ENCODE measurements at regions of chr14 and their contacts with region 1.

Region 1: GRCh38 chr14:55438066-55438683 is 2.2 kb downstream of the TBPL2 start:
- DNase-seq: peak; percentile 59 to 71
- ATAC-seq: peak; percentile 93
- H3K4me3 ChIP-seq: no peak overlapping the region
- H3K27ac ChIP-seq: no peak overlapping the region
- H3K4me1 ChIP-seq: no peaks in the 10 kb centered on the region
- CTCF ChIP-seq: peak; percentile 86
- EP300 ChIP-seq: no peak
- POLR2A ChIP-seq: no peak
- RAD21 ChIP-seq: peak; percentile 87 to 89

Region 2: GRCh38 chr14:55381040-55381439 is 57.1 kb before region 1 on chr14:
- CTCF ChIA-PET with region 1: no interaction called
- POLR2A ChIA-PET with region 1: no interaction called
- DNase-seq: no peak
- ATAC-seq: no peak
- H3K4me3 ChIP-seq: no peak overlapping the region
- H3K27ac ChIP-seq: no peak overlapping the region
- H3K4me1 ChIP-seq: peaks cover 8% of the 10 kb centered on the region; the same call in 2 of the 3 replicates
- CTCF ChIP-seq: no peak
- EP300 ChIP-seq: no peak
- POLR2A ChIP-seq: no peak
- RAD21 ChIP-seq: no peak

Region 3: GRCh38 chr14:55416866-55417265 is 21.3 kb before region 1 on chr14:
- CTCF ChIA-PET with region 1: interaction called, 21 read pairs
- POLR2A ChIA-PET with region 1: no interaction called
- DNase-seq: peak in 1 of 2 experiments; percentile 51
- ATAC-seq: peak; percentile 54 to 79; a peak in 3 of 6 replicates
- H3K4me3 ChIP-seq: no peak overlapping the region
- H3K27ac ChIP-seq: no peak overlapping the region
- H3K4me1 ChIP-seq: peaks cover 3% of the 10 kb centered on the region; the same call in 1 of the 3 replicates
- CTCF ChIP-seq: peak; percentile 44
- EP300 ChIP-seq: no peak
- POLR2A ChIP-seq: no peak
- RAD21 ChIP-seq: peak in 1 of 2 experiments; percentile 55; a peak in 3 of 5 replicates

Region 4: DNA sequence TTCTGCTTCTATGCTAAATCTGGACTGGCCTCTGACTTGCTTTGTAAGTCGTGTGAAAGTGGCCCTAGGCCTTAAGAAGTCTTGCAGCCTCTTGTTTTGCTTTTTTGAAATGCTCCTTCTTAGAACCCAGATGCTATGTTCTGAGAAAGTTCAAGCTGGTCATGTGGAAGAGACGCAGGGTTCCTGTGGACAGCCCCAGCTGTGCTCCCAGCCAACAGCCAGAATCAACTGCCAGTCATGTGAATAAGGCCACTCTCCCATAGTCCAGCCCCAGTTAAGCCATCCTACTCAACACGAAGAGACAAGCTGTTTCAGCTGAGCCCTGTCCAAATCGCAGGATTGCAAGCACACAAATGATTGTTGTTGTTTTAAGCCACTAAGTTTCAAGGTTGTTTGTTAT is 39.5 kb after region 1 on chr14:
- CTCF ChIA-PET with region 1: no interaction called
- POLR2A ChIA-PET with region 1: no interaction called
- DNase-seq: no peak
- ATAC-seq: no peak
- H3K4me3 ChIP-seq: no peak overlapping the region
- H3K27ac ChIP-seq: no peak overlapping the region
- H3K4me1 ChIP-seq: no peaks in the 10 kb centered on the region
- CTCF ChIP-seq: no peak
- EP300 ChIP-seq: no peak
- POLR2A ChIP-seq: no peak
- RAD21 ChIP-seq: no peak

Region 5: DNA sequence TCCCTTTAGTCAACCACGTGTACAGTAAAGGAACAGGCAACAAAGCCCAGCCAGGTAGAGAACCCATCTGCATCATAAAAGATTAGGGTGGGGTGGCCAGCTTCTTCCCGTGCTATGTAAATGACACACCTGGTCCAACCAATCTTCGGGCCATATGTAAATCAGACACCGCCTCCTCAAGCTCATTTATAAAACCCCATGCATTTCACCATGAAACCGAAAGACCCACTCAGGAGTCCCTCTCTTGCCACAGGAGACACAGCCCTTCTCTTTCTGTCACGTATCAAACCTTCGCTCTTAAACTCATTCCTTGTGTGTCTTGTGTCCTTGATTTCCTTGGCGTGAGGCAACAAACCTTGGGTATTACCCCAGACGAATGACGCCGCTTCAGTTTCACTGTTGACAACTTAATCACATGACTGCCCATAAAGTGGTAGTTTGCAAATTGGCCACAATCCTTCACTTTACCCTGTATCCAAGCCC is 62.1 kb after region 1 on chr14:
- CTCF ChIA-PET with region 1: no interaction called
- POLR2A ChIA-PET with region 1: no interaction called
- DNase-seq: no peak
- ATAC-seq: no peak
- H3K4me3 ChIP-seq: no peak overlapping the region
- H3K27ac ChIP-seq: no peak overlapping the region
- H3K4me1 ChIP-seq: 0 out of 3 replicates have a peak, but pooled peaks cover 6% of the 10 kb centered on the region
- CTCF ChIP-seq: no peak
- EP300 ChIP-seq: no peak
- POLR2A ChIP-seq: no peak
- RAD21 ChIP-seq: no peak

Region 6: GRCh38 chr14:55638665-55639064 is 200.5 kb after region 1 on chr14:
- CTCF ChIA-PET with region 1: interaction called, 12 read pairs
- POLR2A ChIA-PET with region 1: no interaction called
- DNase-seq: no peak
- ATAC-seq: no peak
- H3K4me3 ChIP-seq: no peak overlapping the region
- H3K27ac ChIP-seq: no peak overlapping the region
- H3K4me1 ChIP-seq: no peaks in the 10 kb centered on the region
- CTCF ChIP-seq: no peak
- EP300 ChIP-seq: no peak
- POLR2A ChIP-seq: no peak
- RAD21 ChIP-seq: no peak

Region 7: DNA sequence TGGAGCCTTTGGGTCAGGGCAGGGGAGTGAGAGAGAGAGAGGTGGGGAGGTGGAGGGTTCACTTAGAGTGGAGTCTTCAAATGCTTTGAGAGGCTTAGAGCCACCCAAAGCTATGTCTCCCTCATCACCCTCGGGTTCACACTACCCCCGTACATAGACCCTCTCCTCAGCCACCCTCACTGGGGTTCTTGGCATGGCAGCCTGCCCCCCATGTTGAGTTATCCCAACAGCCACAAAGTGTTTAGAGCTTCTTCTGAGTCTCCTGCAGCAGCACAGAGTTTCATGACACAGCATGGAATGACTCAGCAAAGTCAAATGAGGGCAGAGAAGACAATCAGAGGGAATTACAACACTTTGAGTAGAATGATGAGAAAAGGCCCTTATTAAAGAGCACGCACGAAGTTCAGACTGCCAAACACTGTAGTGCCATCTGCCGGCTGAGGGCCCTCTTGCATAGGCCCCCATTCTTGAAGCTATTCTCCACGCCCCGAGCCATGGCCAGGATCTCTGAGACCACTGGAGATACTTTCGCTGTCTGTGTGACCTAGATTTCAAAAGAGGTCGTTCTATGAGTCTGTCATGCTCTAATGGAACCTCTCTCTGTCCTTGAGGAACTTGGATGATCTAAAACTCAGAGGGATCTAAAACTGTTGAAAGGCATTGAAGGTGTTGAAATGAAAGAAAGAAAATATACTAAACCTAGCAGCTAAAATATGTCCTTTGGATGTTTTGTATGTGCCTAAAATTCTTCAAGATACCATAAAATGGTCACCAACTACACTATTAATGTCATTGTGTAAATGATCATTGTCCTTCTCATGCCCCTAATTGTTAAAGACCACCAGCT is 901.9 kb after region 1 on chr14:
- CTCF ChIA-PET with region 1: interaction called, 19 read pairs
- POLR2A ChIA-PET with region 1: no interaction called
- DNase-seq: peak; percentile 60 to 86
- ATAC-seq: peak; percentile 93 to 99
- H3K4me3 ChIP-seq: no peak overlapping the region
- H3K27ac ChIP-seq: peak overlapping the region; percentile 73 to 85
- H3K4me1 ChIP-seq: peaks cover 13% of the 10 kb centered on the region
- CTCF ChIP-seq: peak; percentile 81
- EP300 ChIP-seq: no peak
- POLR2A ChIP-seq: no peak
- RAD21 ChIP-seq: peak; percentile 88 to 94

Region 8: DNA sequence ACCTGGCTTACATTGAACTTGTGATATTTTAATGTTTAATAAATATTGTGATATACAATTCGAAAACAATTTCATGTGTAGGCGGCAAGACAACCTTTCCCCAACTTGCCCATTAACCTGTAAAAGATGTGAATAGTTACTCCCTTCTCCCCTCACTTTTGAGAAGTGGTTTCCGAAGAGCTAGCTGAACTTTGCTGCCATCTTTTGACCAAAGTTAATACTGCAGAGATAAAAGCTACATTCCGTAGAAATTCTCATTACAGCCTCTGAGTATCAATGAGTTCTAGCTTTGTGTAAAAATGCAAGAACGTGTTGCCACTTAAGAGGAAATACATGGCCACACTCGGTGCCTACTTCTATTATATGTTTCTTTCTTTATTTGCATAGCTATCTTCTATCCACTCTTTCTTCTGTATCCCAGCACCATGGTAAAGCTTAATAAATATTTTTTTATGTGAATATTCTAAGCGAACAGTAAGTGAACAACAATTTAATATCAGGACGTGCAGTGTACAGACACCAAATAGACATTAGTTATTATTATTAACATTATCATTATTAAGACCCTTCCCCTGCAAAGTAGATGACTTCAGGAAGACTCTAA is 1036.3 kb after region 1 on chr14:
- CTCF ChIA-PET with region 1: interaction called, 38 read pairs
- POLR2A ChIA-PET with region 1: interaction called, 6 read pairs
- DNase-seq: peak; percentile 19 to 37
- ATAC-seq: peak; percentile 30 to 73; a peak in 4 of 6 replicates
- H3K4me3 ChIP-seq: no peak overlapping the region
- H3K27ac ChIP-seq: no peak overlapping the region
- H3K4me1 ChIP-seq: no peaks in the 10 kb centered on the region
- CTCF ChIP-seq: peak; percentile 90
- EP300 ChIP-seq: no peak
- POLR2A ChIP-seq: no peak
- RAD21 ChIP-seq: peak; percentile 90 to 92